ENCODE measurements at regions of chr1 and their contacts with region 1.

Region 1: DNA sequence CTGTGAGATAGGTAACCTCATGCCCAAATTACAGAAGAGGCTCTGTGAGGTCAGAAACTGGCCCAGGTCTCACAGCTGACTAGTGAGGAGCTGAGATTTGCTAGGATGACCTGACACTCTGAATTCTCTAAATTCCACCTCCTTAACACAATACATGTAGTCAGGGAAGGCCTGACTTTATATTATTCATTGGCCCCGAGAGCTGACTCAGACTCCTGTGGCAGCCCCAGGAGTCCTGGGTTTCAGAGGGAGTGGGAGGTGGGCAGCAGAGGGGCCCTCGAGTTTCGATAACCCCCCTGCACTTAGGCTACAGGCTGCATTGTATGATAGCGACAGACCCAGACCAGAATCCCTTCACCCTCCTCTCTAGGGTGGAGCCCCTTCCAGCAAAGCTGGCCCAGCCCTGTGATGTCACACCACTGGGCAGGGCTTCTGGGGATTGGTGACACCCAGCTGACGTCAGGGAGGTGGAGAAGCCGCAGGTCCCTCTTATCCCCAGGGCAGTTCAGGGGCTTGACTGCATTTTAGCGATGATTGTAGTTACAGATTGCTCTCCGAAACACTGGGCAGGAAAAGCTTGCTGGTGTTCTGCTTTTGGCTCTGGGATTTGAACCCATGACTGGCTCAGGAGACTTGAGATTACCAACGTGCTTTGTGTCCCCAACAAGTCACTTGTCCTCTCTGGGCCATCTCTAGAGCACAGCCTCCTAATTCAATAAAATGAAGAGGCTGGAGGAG is 17.0 kb upstream of the GPR37L1 start:
- DNase-seq: peak; percentile 95
- H3K4me3 ChIP-seq: peak overlapping the region; percentile 1
- H3K27ac ChIP-seq: peak overlapping the region; percentile 97
- H3K4me1 ChIP-seq: peaks cover 13% of the 10 kb centered on the region
- H3K27me3 ChIP-seq: no peaks in the 10 kb centered on the region
- CTCF ChIP-seq: no peak

Region 2: GRCh38 chr1:202009326-202010179 is 96.2 kb before region 1 on chr1:
- intact Hi-C with region 1: loop called (anchors 5 kb)
- DNase-seq: peak; percentile 94
- H3K4me3 ChIP-seq: peak overlapping the region; percentile 35
- H3K27ac ChIP-seq: peak overlapping the region; percentile 84
- H3K4me1 ChIP-seq: no peaks in the 10 kb centered on the region
- H3K27me3 ChIP-seq: no peaks in the 10 kb centered on the region
- CTCF ChIP-seq: peak; percentile 81